IMR-90 (cell line): ENCODE measurements at regions of chrX and their contacts with region 1.

Region 1: GRCh38 chrX:65667503-65668376 is at the start of gene MSN:
- DNase-seq: peak; percentile 35
- ATAC-seq: peak; percentile 86
- H3K4me3 ChIP-seq: peak within 1 kb of the TSS; percentile 99
- H3K27ac ChIP-seq: peak within 1 kb of the TSS; percentile 99
- H3K4me1 ChIP-seq: no peaks in the 10 kb centered on the region; the same call in 1 of the 2 replicates
- H3K27me3 ChIP-seq: no peaks in the 10 kb centered on the region
- CTCF ChIP-seq: no peak; the same call in none of the 2 replicates
- POLR2A ChIP-seq: peak; percentile 80
- RAD21 ChIP-seq: peak; percentile 21; the same call in 1 of the 2 replicates
- total RNA-seq, gene MSN: 580 and 619 TPM in 2 replicates

Region 2: DNA sequence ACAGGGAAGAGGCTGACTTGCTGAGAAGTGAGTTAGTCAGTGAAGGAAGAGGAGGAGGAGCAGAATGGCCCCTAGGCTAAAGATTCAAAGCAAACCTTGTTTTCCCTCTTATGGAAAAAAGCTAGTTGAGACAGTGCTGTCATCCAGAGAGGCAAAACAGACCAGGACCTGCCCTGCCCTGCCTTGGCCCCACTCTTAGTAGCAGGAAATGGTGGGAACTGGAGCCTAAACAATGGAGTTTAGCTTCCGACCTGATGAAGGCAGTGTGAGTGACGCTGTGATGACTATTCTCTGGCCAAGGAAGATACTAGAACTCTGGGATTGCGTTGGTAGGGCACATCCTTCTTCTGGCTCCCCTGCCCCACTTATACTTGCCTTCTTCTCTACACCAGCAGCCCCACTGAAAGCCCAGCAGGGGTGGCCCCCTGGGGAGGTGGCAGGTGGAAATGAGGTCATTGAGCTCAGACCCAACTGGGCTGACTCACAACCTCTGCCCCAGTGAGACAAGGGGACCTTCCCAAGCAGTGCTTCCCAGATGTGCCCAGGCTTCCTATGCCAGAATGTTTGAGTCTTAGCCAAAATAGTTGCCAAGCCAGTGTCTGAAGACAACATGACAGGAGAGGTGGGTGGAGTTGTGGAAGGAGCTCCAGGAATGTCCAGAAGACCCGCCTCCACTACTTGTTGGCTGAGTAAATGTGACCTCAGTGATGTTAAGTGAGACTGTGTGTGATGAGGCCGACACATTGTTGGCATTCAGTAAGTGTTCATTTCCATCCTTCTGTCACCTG is 38.5 kb after region 1 on chrX:
- CTCF ChIA-PET with region 1: no interaction called
- POLR2A ChIA-PET with region 1: interaction called, 4 read pairs
- dilution Hi-C with region 1: no loop called
- in situ Hi-C with region 1: no loop called
- intact Hi-C with region 1: loop called (anchors 1 kb)
- DNase-seq: peak; percentile 85
- ATAC-seq: peak; percentile 73
- H3K4me3 ChIP-seq: no peak overlapping the region
- H3K27ac ChIP-seq: peak overlapping the region; percentile 52
- H3K4me1 ChIP-seq: peaks cover 21% of the 10 kb centered on the region
- H3K27me3 ChIP-seq: no peaks in the 10 kb centered on the region
- CTCF ChIP-seq: no peak
- POLR2A ChIP-seq: no peak
- RAD21 ChIP-seq: no peak